Activated CD4-positive, alpha-beta T cell treated with anti-CD3 and anti-CD28 coated beads, Interleukin-2, amount 10 ng/mL, durations not matched to agents 24 days and 14 days (primary cell): ENCODE measurements at regions of chr11 and their contacts with region 1.

Region 1: GRCh38 chr11:48307760-48308386 is 1.9 kb downstream of the OR4S1 start:
- DNase-seq: peak; percentile 91
- H3K4me3 Mint-ChIP-seq: no peak overlapping the region
- H3K27ac Mint-ChIP-seq: no peak overlapping the region
- H3K4me1 Mint-ChIP-seq: no peaks in the 10 kb centered on the region
- H3K27me3 Mint-ChIP-seq: no peaks in the 10 kb centered on the region

Region 2: GRCh38 chr11:47538741-47539574 is 768.9 kb before region 1 on chr11:
- intact Hi-C with region 1: no loop called
- DNase-seq: no peak
- H3K4me3 Mint-ChIP-seq: no peak overlapping the region
- H3K27ac Mint-ChIP-seq: peak overlapping the region; percentile 81
- H3K4me1 Mint-ChIP-seq: peaks cover 32% of the 10 kb centered on the region
- H3K27me3 Mint-ChIP-seq: no peaks in the 10 kb centered on the region

Region 3: GRCh38 chr11:48167380-48167779 is 140.5 kb before region 1 on chr11:
- intact Hi-C with region 1: no loop called
- DNase-seq: no peak
- H3K4me3 Mint-ChIP-seq: no peak overlapping the region
- H3K27ac Mint-ChIP-seq: no peak overlapping the region
- H3K4me1 Mint-ChIP-seq: peaks cover 22% of the 10 kb centered on the region
- H3K27me3 Mint-ChIP-seq: no peaks in the 10 kb centered on the region

Region 4: GRCh38 chr11:49533204-49533603 is 1225.3 kb after region 1 on chr11:
- intact Hi-C with region 1: loop called (anchors 5 kb)
- DNase-seq: no peak
- H3K4me3 Mint-ChIP-seq: no peak overlapping the region
- H3K27ac Mint-ChIP-seq: no peak overlapping the region
- H3K4me1 Mint-ChIP-seq: no peaks in the 10 kb centered on the region
- H3K27me3 Mint-ChIP-seq: no peaks in the 10 kb centered on the region

Region 5: DNA sequence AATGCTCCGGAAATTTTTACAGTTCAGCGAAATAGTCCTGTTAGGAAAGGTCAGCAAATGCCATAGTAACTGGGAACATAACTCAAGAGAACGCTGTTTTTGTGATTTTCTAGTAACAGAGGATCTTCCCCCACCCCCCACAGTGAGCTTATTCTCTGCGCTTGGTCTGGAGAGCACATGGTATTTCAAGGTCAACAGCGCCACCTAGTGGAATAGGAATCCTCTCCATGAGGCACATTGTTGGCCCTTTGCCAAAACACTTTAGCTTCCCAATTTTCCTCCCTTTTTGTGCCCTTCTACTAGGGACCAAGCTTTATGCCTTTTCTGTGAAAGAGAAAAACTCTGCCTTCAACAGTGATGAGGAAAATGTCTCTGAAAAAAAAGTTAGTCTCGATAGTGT is 1687.7 kb after region 1 on chr11:
- intact Hi-C with region 1: loop called (anchors 5 kb)
- DNase-seq: peak; percentile 75
- H3K4me3 Mint-ChIP-seq: no peak overlapping the region
- H3K27ac Mint-ChIP-seq: no peak overlapping the region
- H3K4me1 Mint-ChIP-seq: no peaks in the 10 kb centered on the region
- H3K27me3 Mint-ChIP-seq: no peaks in the 10 kb centered on the region